Motor neuron (in vitro differentiated cells): ENCODE measurements at regions of chr2 and their contacts with region 1.

Region 1: GRCh38 chr2:199985625-199986207 is 30.3 kb downstream of the MAIP1 start:
- ATAC-seq: peak; percentile 49 to 90 (median 72)
- H3K4me3 ChIP-seq: no peak overlapping the region
- H3K27ac ChIP-seq: no peak overlapping the region
- H3K4me1 ChIP-seq: peaks cover 16 to 22% of the 10 kb centered on the region in 2 donors

Region 2: GRCh38 chr2:199739413-199740110 is 246.2 kb before region 1 on chr2:
- in situ Hi-C with region 1: no loop called
- ATAC-seq: peak in 7 of 8 experiments; percentile 48 to 72 (median 54)
- H3K4me3 ChIP-seq: no peak overlapping the region
- H3K27ac ChIP-seq: no peak overlapping the region
- H3K4me1 ChIP-seq: peaks cover 0 to 4% of the 10 kb centered on the region in 2 donors

Region 3: GRCh38 chr2:200177971-200178911 is 192.5 kb after region 1 on chr2:
- in situ Hi-C with region 1: loop called in 1 of 9 experiments (anchors 25 kb)
- ATAC-seq: no peak
- H3K4me3 ChIP-seq: no peak overlapping the region
- H3K27ac ChIP-seq: no peak overlapping the region
- H3K4me1 ChIP-seq: no peaks in the 10 kb centered on the region

Region 4: GRCh38 chr2:200274116-200275075 is 288.7 kb after region 1 on chr2:
- in situ Hi-C with region 1: loop called in 3 of 9 experiments (anchors 25 kb)
- ATAC-seq: peak in 6 of 8 experiments; percentile 59 to 76 (median 70)
- H3K4me3 ChIP-seq: no peak overlapping the region
- H3K27ac ChIP-seq: no peak overlapping the region
- H3K4me1 ChIP-seq: peaks cover 13 to 19% of the 10 kb centered on the region in 2 donors

Region 5: GRCh38 chr2:200306196-200306930 is 320.6 kb after region 1 on chr2 and contains the start of gene SPATS2L:
- in situ Hi-C with region 1: loop called in 2 of 9 experiments (anchors 25 kb)
- ATAC-seq: peak; percentile 67 to 81 (median 77)
- H3K4me3 ChIP-seq: peak within 1 kb of the TSS; percentile 68 to 96 (median 81)
- H3K27ac ChIP-seq: peak within 1 kb of the TSS; percentile 76 to 78
- H3K4me1 ChIP-seq: peaks cover 8 to 9% of the 10 kb centered on the region in 2 donors
- total RNA-seq, gene SPATS2L: 8.4 to 143 (median 21.9) TPM

Region 6: DNA sequence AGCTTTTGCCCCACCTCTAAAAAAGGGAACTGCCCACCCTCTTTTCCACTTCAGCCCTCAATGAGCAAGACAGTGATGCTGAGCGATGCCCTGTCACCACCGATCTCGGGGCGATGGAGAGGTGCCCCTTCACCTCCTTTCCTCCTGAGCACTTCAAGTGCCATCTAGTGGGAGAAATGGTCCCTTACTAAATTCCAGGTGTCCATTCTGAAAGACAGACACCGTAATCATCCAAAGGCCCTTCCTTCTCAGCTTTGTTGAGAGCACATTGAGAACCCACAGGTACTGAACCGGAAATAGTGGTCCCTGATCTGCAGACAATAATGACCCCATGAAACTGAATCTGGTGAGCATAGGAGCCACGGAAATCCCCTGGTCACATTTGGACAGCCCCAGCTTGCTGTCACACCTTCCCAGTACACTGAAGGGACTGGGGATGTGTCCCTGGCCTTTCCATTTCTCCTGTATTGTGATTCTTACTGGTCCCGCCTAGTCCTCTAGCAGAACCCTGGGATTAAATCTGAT is 485.7 kb after region 1 on chr2:
- in situ Hi-C with region 1: loop called in 5 of 9 experiments (anchors 25 kb)
- ATAC-seq: peak in 4 of 8 experiments; percentile 35 to 55 (median 46)
- H3K4me3 ChIP-seq: no peak overlapping the region
- H3K27ac ChIP-seq: no peak overlapping the region
- H3K4me1 ChIP-seq: peaks cover 2 to 10% of the 10 kb centered on the region in 2 donors

Region 7: DNA sequence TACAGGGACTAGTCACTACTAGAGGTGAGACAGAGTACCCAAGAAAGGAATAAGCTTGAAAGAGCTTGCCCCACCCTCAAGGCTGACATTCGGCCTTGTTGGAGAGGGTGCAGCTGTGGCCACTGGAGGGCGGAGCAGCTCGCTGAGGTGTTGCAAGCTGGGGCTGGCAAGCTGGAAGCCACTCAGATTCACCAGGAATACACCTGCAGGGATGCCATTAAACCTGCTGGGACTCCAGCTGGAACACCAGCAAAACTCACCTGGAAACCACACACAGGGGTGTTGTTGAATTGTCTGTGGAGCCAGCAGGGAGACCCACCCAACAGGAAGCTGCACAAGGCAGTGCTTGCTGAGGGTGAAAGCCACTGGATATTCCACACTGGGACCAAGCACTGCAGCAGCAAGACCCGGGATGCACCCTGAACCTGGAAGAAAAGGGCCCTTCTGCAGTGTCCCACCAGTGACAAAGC is 498.0 kb after region 1 on chr2:
- in situ Hi-C with region 1: loop called in 3 of 9 experiments (anchors 5 to 25 kb)
- ATAC-seq: peak; percentile 30 to 79 (median 52)
- H3K4me3 ChIP-seq: no peak overlapping the region
- H3K27ac ChIP-seq: no peak overlapping the region
- H3K4me1 ChIP-seq: peaks cover 0 to 2% of the 10 kb centered on the region in 2 donors

Region 8: GRCh38 chr2:200713003-200713703 is 727.4 kb after region 1 on chr2:
- in situ Hi-C with region 1: loop called in 1 of 9 experiments (anchors 25 kb)
- ATAC-seq: peak; percentile 92 to 100 (median 99)
- H3K4me3 ChIP-seq: peak overlapping the region in 4 of 5 donors; percentile 3 to 12 (median 7)
- H3K27ac ChIP-seq: peak overlapping the region; percentile 17 to 23
- H3K4me1 ChIP-seq: peaks cover 4 to 11% of the 10 kb centered on the region in 2 donors